ENCODE measurements at regions of chr6 and their contacts with region 1.

Region 1: DNA sequence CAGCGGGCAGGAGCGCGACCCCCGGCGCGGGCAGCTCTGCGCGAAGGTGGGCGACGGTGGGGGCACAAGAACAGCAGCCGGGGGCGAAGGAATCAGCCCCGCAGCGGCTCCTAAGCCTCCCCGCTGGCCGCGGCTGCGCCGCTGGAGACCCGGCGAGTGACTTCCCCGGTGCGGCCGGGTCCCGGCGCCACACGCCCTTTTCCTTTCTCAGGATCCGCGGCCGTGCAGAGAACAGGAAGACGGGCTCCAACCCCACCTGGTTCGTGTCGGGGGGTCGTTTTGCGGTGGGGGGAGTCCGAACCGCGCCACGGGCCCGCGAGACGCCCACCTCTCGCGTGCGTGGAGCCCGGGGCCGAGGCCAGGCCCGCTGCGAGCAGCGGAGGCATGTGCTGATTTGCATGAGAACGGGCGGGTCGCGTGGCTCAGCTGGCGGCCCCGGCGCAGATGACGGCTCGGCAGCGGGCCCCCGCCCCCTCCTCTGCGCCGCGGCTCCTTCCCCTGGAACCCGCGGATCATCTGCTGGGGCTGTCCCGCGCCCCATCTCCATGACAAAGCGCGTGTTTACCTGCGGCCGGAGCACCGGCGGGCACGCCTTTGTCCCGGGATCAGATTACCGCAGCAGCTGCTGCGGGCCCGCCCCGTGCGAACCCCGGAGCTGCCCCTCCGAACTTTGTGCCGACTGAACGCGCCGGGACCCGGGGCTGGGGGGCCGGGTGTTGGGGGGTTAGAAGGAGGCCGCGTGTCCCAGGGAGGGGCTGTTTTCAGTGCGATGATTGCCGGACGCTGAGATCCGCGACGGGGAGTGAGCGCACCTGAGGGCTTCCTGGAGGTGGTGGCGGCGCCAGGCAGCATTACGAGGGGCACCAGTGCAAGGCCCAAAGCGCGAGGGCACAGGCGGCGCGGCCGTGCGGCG is 4.9 kb upstream of the DLL1 start:
- DNase-seq: peak in 3 of 10 donors; percentile 29 to 59 (median 51)
- H3K4me3 ChIP-seq: peak overlapping the region; percentile 35 to 73 (median 56)
- H3K27ac ChIP-seq: peak overlapping the region in 45 of 59 donors; percentile 17 to 98 (median 92)
- H3K27me3 ChIP-seq: peaks cover 0 to 64% (median 32%) of the 10 kb centered on the region in 45 donors
- CTCF ChIP-seq: no peak

Region 2: DNA sequence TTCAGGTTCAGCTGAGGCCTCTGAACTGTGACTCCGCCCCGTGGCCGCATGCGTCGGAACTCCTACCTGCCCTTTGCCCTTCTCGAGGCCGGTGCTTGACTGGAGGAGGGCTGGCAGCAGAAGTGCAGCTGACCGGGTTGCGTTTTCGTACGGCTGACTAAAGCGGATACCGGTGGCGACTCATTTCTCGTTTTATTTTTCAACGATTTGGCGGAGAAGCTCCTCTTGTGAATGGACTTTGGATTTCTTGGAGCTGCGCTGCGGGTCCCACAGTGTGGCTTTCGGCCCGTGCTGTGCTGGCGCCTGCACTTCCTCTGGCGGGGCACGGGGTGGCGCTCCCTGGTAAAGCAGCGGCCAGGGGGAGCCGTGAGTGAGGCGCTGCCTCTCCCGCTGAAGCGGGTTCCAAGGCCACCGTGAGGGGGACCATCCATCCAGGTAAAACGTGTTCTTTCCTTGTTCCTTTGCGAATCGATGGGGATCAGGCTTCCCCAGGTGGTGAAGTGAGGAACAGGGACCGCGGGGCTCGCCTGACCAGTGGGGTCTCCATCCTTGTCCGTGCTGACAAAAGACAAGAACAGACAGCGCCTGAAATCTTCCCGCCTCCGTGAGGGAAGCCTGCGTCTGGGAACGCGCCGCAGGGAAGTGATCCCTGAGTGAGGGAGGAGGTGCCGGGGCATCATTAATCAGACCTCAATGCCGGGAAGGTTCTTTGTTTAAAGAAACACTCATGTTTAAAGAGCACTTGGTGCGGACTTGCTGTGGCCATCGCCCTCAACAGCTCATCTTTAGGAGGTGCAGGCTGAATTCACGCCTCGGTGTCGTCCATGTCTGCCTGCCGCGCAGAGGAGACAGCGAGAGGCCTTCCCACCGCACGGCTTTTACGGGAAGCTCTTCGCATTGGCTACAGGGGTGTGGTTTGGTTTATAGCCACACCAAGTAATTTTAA is 505.5 kb before region 1 on chr6:
- intact Hi-C with region 1: loop called (anchors 5 kb)
- DNase-seq: peak; percentile 57 to 87 (median 78)
- H3K4me3 ChIP-seq: peak overlapping the region; percentile 41 to 79 (median 66)
- H3K27ac ChIP-seq: peak overlapping the region in 48 of 59 donors; percentile 16 to 87 (median 67)
- H3K27me3 ChIP-seq: no peaks in the 10 kb centered on the region
- CTCF ChIP-seq: peak; percentile 40 to 99 (median 96)

Region 3: DNA sequence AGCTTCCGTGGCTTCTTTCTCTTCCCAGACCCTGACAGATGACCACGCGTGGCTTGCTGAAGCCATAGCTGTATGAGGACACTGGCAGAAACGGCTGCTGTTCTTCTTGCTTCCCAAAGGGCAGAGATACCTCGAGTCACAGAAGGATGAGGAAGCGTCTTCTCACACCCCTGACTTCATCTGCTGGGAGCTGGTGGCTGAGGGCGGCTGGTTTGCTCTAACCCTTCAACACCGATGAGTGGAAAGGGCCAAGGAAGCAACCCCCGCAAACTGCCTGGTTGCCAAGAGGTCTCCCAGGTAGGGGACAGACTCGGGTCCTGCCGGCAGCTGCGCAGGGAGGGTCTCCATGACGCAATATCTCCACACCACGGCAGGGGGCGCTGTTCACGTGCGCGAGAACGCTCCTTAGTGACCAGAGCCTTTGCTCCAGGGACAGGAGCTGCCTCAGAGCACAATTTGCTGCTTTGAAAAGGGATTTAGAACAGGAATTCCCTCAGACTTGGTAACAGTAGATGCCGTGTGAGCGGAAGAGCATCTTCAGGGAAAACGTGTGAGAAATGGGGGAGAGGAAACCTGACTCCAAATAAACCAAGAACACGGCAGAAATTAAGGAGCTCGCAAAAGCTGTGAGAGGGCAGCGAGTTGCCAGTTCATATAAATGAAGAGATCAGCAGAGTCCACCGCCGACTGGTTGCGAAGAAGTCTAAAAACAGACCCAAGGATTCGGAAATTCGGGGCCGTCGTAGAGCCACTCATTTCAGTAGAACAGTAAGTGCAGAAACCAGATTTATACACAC is 464.1 kb before region 1 on chr6:
- intact Hi-C with region 1: loop called (anchors 1 to 5 kb)
- DNase-seq: peak; percentile 67 to 88 (median 82)
- H3K4me3 ChIP-seq: peak overlapping the region in 46 of 59 donors; percentile 4 to 50 (median 34)
- H3K27ac ChIP-seq: no peak overlapping the region
- H3K27me3 ChIP-seq: no peaks in the 10 kb centered on the region
- CTCF ChIP-seq: peak; percentile 87 to 99 (median 97)

Region 4: GRCh38 chr6:169959136-169960002 is 336.4 kb before region 1 on chr6:
- intact Hi-C with region 1: loop called (anchors 2 to 5 kb)
- DNase-seq: peak in 7 of 10 donors; percentile 5 to 35 (median 16)
- H3K4me3 ChIP-seq: no peak overlapping the region
- H3K27ac ChIP-seq: no peak overlapping the region
- H3K27me3 ChIP-seq: peaks cover 0 to 15% (median 0%) of the 10 kb centered on the region in 45 donors
- CTCF ChIP-seq: no peak

Region 5: GRCh38 chr6:170075659-170076223 is 220.0 kb before region 1 on chr6:
- intact Hi-C with region 1: no loop called
- DNase-seq: peak in 4 of 10 donors; percentile 19 to 34 (median 28)
- H3K4me3 ChIP-seq: no peak overlapping the region
- H3K27ac ChIP-seq: peak overlapping the region in 1 of 59 donors; percentile 21
- H3K27me3 ChIP-seq: no peaks in the 10 kb centered on the region
- CTCF ChIP-seq: no peak

Region 6: GRCh38 chr6:170265655-170266054 is 30.1 kb before region 1 on chr6:
- intact Hi-C with region 1: loop called in 1 of 2 experiments (anchors 2 kb)
- DNase-seq: peak; percentile 19 to 90 (median 82)
- H3K4me3 ChIP-seq: peak overlapping the region in 51 of 59 donors; percentile 3 to 60 (median 28)
- H3K27ac ChIP-seq: peak overlapping the region; percentile 2 to 98 (median 91)
- H3K27me3 ChIP-seq: no peaks in the 10 kb centered on the region
- CTCF ChIP-seq: peak in 2 of 56 donors; percentile 5 to 13

Region 7: GRCh38 chr6:170371588-170371987 is 75.8 kb after region 1 on chr6:
- intact Hi-C with region 1: loop called in 1 of 2 experiments (anchors 5 kb)
- DNase-seq: peak in 9 of 10 donors; percentile 45 to 78 (median 66)
- H3K4me3 ChIP-seq: peak overlapping the region in 7 of 59 donors; percentile 2 to 22 (median 8)
- H3K27ac ChIP-seq: peak overlapping the region in 45 of 59 donors; percentile 7 to 82 (median 60)
- H3K27me3 ChIP-seq: no peaks in the 10 kb centered on the region
- CTCF ChIP-seq: peak in 31 of 56 donors; percentile 9 to 58 (median 31)

Region 8: DNA sequence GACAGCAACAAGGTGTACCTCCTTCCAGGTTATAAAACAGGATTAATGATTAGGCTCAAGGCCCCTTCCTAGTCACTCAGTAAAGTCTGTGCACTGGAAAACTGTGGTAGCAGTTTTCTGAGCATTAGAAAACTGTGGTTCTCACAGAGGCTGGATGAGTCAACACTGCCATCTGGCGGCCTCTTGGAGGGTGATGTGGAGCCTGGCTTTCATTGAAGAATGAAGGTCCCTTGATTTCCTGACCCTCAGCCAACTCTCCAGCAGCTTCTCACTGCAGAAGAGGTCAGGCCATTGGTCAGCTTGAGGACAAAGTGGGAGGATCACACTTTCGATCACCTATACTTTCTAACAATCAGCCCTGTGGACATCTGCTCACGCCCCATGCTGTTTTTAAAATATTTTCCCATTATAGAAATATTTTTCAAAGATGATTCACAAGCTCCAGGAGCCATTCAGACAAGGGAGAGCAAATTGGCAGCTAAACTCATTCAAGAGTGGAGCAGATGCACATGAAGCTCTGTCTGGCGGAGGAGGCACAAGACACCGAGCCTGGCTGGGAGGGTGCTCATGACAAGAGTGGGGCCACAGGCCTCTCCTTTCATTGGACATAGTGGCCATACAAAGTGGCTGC is 234.2 kb after region 1 on chr6:
- intact Hi-C with region 1: loop called (anchors 5 to 10 kb)
- DNase-seq: peak; percentile 73 to 88 (median 80)
- H3K4me3 ChIP-seq: no peak overlapping the region
- H3K27ac ChIP-seq: peak overlapping the region in 13 of 59 donors; percentile 1 to 48 (median 12)
- H3K27me3 ChIP-seq: no peaks in the 10 kb centered on the region
- CTCF ChIP-seq: peak; percentile 74 to 96 (median 90)

Measured in dorsolateral prefrontal cortex (tissue), 120 donors.